ENCODE measurements at regions of chr16 and their contacts with region 1.

Region 1: GRCh38 chr16:30657866-30658730 is at the start of gene FBRS:
- DNase-seq: peak; percentile 100
- ATAC-seq: peak; percentile 79
- H3K4me3 Mint-ChIP-seq: peak within 1 kb of the TSS; percentile 89
- H3K27ac Mint-ChIP-seq: peak within 1 kb of the TSS; percentile 99
- H3K4me1 Mint-ChIP-seq: peaks cover 41% of the 10 kb centered on the region
- H3K27me3 Mint-ChIP-seq: no peaks in the 10 kb centered on the region
- total RNA-seq, gene FBRS: 84.7 to 111 TPM

Region 2: GRCh38 chr16:30122604-30123160 is 535.4 kb before region 1 on chr16:
- CTCF ChIA-PET with region 1: no interaction called
- POLR2A ChIA-PET with region 1: no interaction called
- intact Hi-C with region 1: loop called in 1 of 2 experiments (anchors 1 kb)
- DNase-seq: peak; percentile 35
- ATAC-seq: peak; percentile 37
- H3K4me3 Mint-ChIP-seq: peak overlapping the region; percentile 87
- H3K27ac Mint-ChIP-seq: peak overlapping the region; percentile 89
- H3K4me1 Mint-ChIP-seq: peaks cover 17% of the 10 kb centered on the region
- H3K27me3 Mint-ChIP-seq: no peaks in the 10 kb centered on the region

Region 3: DNA sequence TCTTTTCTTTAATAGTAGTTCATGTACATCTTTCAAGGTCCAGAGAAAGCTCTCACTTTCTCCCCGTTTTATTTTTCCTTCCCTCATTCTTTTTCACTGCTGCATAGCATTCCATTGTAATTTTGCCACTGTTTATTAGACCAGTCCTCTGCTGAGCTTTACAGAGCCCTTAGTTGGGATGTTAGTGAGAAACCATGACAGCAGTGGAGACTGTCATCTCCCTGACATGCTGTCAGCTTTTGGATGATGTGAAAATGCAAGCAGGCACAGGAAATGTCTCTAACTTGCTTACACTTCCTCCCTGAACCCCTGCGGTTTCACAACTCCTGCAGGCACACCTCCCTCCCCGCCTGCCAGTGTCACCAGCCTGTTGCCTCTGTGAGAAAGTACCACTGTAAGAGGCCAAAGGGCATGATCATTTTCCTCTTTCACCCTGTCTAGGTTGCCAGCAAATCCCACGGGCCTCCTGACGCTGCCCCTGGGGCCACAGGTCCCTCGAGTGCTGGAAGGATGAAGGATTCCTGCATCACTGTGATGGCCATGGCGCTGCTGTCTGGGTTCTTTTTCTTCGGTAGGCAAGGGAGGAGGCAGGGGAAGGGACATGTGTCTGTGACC is 185.7 kb before region 1 on chr16 and contains the start of gene ITGAL:
- CTCF ChIA-PET with region 1: no interaction called
- POLR2A ChIA-PET with region 1: no interaction called
- intact Hi-C with region 1: loop called in 1 of 2 experiments (anchors 1 kb)
- DNase-seq: peak; percentile 93
- ATAC-seq: peak; percentile 62
- H3K4me3 Mint-ChIP-seq: peak within 1 kb of the TSS; percentile 95
- H3K27ac Mint-ChIP-seq: peak within 1 kb of the TSS; percentile 99
- H3K4me1 Mint-ChIP-seq: peaks cover 63% of the 10 kb centered on the region
- H3K27me3 Mint-ChIP-seq: no peaks in the 10 kb centered on the region
- total RNA-seq, gene ITGAL: 210 to 222 TPM

Region 4: DNA sequence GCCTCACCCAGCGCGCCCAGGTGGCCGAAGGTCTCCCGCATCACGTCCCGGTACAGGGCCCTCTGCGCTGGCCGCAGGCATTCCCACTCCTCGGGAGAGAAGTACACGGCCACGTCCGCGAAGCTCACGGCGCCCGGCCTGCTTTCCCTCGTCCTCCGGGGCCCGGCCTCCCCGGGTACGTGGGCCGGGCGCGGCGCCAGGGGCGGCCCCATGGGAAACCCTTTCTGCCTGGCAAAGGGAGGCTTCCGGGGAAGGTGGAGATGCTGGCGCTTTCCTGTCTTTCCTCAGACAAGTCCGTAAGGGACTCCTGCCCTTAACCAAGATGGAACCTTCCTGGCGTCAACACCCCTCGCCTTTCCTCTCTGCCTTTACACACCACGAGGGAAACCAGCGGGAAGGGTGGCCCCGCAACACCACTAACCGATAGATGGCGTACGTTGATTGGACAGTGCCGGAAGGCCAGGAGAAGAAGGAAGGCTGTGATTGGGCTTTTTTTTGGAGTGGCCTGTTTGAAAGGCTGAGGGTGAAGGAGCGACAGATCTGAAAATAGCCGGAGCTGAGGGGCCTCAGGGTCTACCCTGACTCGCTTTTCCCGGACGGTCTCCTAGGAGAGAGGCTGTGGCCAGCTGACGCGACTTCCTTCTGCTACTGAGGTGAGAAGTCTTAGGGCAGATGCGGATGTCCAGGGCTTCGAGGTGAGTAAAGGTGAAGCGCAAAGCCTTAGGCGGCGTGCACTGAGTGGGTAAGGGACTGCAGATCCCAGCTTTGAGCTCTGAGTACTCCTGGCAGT is 72.5 kb before region 1 on chr16 and contains the start of gene ZNF785:
- CTCF ChIA-PET with region 1: no interaction called
- POLR2A ChIA-PET with region 1: no interaction called
- intact Hi-C with region 1: loop called in 1 of 2 experiments (anchors 2 kb)
- DNase-seq: peak; percentile 96
- ATAC-seq: peak; percentile 99
- H3K4me3 Mint-ChIP-seq: peak within 1 kb of the TSS; percentile 87
- H3K27ac Mint-ChIP-seq: peak within 1 kb of the TSS; percentile 92
- H3K4me1 Mint-ChIP-seq: peaks cover 37% of the 10 kb centered on the region
- H3K27me3 Mint-ChIP-seq: no peaks in the 10 kb centered on the region
- total RNA-seq, gene ZNF785: 9.2 to 10.8 TPM

Region 5: GRCh38 chr16:30747799-30748634 is 89.9 kb after region 1 on chr16 and contains the start of gene PHKG2:
- CTCF ChIA-PET with region 1: interaction called, 3 read pairs
- POLR2A ChIA-PET with region 1: interaction called, 4 read pairs
- intact Hi-C with region 1: loop called in 1 of 2 experiments (anchors 2 kb)
- DNase-seq: peak; percentile 99
- ATAC-seq: peak; percentile 99
- H3K4me3 Mint-ChIP-seq: peak within 1 kb of the TSS; percentile 88
- H3K27ac Mint-ChIP-seq: peak within 1 kb of the TSS; percentile 88
- H3K4me1 Mint-ChIP-seq: peaks cover 21% of the 10 kb centered on the region
- H3K27me3 Mint-ChIP-seq: no peaks in the 10 kb centered on the region
- total RNA-seq, gene PHKG2: 21.8 to 26.0 TPM

Region 6: GRCh38 chr16:30957456-30958174 is 299.5 kb after region 1 on chr16 and contains the start of gene SETD1A:
- CTCF ChIA-PET with region 1: no interaction called
- POLR2A ChIA-PET with region 1: no interaction called
- intact Hi-C with region 1: loop called in 1 of 2 experiments (anchors 1 kb)
- DNase-seq: peak; percentile 99
- ATAC-seq: peak; percentile 89
- H3K4me3 Mint-ChIP-seq: peak within 1 kb of the TSS; percentile 93
- H3K27ac Mint-ChIP-seq: peak within 1 kb of the TSS; percentile 99
- H3K4me1 Mint-ChIP-seq: peaks cover 37% of the 10 kb centered on the region
- H3K27me3 Mint-ChIP-seq: no peaks in the 10 kb centered on the region
- total RNA-seq, gene SETD1A: 18.5 to 21.7 TPM

Measured in activated CD4-positive, alpha-beta T cell treated with anti-CD3 and anti-CD28 coated beads for 36 hours (primary cell).